Head of caudate nucleus (tissue), 42 donors: ENCODE measurements at regions of chr9 and their contacts with region 1.

Region 1: DNA sequence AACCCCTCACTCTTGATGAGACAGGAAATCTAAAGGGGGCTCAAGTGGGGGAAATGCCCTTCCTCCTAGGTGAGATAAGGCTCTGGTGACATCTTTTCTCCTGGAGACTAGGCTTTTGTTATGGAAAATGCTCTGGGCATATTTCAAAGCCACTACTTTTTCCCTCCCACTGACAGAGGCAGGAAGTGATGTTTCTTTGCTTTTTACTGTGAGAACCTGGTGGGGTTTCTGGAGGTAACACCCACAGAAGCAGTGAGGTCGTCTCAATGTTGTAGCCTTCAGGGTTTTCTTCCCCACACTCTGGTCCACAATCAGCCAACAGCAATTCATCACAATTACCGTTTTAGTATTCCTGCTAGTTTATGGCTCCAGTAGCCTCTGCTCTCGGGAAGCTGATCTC is 41.4 kb upstream of the FAM240B start:
- DNase-seq: no peak

Region 2: GRCh38 chr9:38707885-38708637 is 53.3 kb before region 1 on chr9:
- intact Hi-C with region 1: loop called (anchors 10 kb)
- DNase-seq: no peak